ENCODE measurements at regions of chr6 and their contacts with region 1.

Region 1: DNA sequence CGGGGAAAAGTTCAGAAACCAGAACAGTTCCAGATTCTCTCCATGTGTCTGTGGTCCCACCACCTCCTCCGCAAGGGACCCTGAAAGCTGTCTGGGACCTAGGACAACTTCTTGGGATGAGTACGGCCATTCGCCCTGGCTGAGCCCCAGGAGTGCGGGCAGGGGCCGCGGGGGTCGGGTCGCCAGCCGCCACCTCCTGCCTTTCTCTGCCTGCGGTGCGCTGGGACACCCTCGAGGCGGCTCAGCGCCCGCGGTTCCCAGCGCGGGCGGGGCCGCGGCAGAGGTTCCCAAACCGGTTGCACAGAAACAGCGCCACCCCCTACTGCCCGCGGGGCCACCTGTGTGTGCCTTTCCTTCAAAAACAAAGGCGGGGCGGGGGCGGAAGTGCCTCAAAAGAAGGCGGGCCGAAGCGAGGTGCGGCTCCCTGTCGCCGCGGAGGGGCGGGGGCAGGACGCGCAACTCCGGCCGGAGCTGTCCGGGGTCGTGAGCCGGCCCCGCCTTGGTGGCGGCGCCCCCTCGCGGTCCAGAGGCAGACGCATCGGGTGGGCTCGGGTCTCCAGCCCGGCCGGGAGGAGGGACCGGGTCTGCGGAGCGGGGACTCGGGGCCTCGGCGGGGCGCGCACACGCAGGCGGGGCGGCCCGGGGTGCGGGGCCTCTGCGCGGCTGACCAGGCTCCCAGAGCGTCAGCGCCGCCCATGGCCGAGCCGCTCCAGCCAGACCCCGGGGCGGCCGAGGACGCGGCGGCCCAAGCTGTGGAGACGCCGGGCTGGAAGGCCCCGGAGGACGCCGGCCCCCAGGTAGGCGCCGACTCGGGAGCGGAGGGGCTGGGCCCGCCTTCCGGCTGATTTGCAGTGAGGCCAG is at the start of gene HEBP2:
- DNase-seq: peak; percentile 93
- ATAC-seq: peak; percentile 86
- H3K4me3 ChIP-seq: peak within 1 kb of the TSS; percentile 83 to 95 (median 93)
- H3K4me3 Mint-ChIP-seq: peak within 1 kb of the TSS; percentile 89
- H3K27ac ChIP-seq: peak within 1 kb of the TSS; percentile 55 to 93
- H3K27ac Mint-ChIP-seq: peak within 1 kb of the TSS; percentile 94
- H3K4me1 ChIP-seq: peaks cover 8 to 16% of the 10 kb centered on the region in 2 donors
- H3K4me1 Mint-ChIP-seq: peaks cover 23% of the 10 kb centered on the region
- H3K27me3 ChIP-seq: no peaks in the 10 kb centered on the region
- H3K27me3 Mint-ChIP-seq: no peaks in the 10 kb centered on the region
- CTCF ChIP-seq: peak; percentile 52
- total RNA-seq, gene HEBP2: 35.1 and 40.7 TPM in 2 replicates

Region 2: DNA sequence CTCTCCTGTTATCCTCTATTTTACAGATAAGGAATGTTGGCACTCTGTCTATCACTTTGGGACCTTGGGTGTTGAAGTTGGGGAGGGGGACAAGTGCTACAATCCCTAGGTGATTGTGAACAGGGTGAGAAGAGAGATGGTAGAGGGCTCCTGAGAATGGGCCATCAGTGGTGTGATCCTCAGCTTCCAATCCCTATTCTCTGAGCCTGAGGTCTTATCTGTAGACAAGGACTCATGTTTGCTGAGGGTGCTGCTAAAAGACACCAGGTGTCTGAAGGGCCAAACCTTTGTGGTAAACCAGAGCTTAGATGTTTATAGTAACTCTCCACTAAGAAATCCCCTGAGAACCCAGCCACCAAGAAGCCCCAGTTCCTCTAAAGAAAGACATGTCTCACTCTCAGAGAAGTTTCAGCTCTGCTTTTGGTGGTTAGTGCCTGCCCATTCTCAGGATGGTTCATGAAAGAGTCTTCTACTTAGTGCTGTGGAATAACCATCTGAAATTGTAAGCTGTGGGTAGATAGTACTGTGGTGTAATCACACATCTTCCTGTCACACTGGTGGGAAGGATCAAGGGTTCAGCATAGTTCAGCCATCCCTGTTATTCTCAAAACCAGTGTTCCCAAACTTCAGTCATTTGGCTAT is 1301.1 kb before region 1 on chr6:
- CTCF ChIA-PET with region 1: no interaction called
- POLR2A ChIA-PET with region 1: no interaction called
- intact Hi-C with region 1: loop called (anchors 10 kb)
- DNase-seq: peak; percentile 92
- ATAC-seq: peak; percentile 81
- H3K4me3 ChIP-seq: peak overlapping the region in 4 of 5 experiments; percentile 8 to 49 (median 16)
- H3K4me3 Mint-ChIP-seq: peak overlapping the region; percentile 86
- H3K27ac ChIP-seq: peak overlapping the region; percentile 97
- H3K27ac Mint-ChIP-seq: peak overlapping the region; percentile 99
- H3K4me1 ChIP-seq: peaks cover 89 to 91% of the 10 kb centered on the region in 2 donors
- H3K4me1 Mint-ChIP-seq: peaks cover 87% of the 10 kb centered on the region
- H3K27me3 ChIP-seq: no peaks in the 10 kb centered on the region
- H3K27me3 Mint-ChIP-seq: no peaks in the 10 kb centered on the region
- CTCF ChIP-seq: no peak

Region 3: DNA sequence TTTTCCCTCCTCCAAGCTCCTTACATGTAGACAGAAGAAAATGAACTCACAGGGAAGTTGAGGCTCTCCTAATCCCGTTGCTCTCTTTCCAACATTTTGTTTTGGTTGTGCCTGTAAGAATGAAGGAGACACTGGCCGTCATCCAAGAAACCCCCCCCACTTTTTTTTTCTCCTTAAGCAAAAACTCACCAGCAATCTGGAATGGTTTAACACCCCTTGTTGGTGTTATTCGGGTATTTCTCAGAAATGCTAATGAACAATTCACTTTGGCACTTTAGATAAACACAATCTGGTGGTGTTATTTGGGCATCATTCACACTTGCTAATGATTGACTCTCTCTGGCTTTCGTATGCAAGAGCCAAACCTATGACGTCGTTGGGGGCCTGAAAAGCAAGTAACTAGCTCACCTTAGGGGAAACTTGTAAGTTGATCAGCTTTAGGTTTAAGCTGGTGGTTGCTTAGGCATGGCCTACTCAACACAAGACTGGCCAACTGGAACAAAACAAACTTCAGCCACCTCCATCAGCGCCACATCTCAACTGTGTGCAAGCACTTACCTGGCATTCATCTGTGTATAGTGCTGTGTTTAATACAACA is 885.5 kb before region 1 on chr6:
- CTCF ChIA-PET with region 1: no interaction called
- POLR2A ChIA-PET with region 1: no interaction called
- intact Hi-C with region 1: no loop called
- DNase-seq: no peak
- ATAC-seq: no peak
- H3K4me3 ChIP-seq: no peak overlapping the region
- H3K4me3 Mint-ChIP-seq: no peak overlapping the region
- H3K27ac ChIP-seq: no peak overlapping the region
- H3K27ac Mint-ChIP-seq: no peak overlapping the region
- H3K4me1 ChIP-seq: peaks cover 0 to 5% of the 10 kb centered on the region in 2 donors
- H3K4me1 Mint-ChIP-seq: peaks cover 2% of the 10 kb centered on the region
- H3K27me3 ChIP-seq: peaks cover 0 to 60% (median 31%) of the 10 kb centered on the region in 4 experiments
- H3K27me3 Mint-ChIP-seq: peaks cover 75% of the 10 kb centered on the region
- CTCF ChIP-seq: no peak

Region 4: DNA sequence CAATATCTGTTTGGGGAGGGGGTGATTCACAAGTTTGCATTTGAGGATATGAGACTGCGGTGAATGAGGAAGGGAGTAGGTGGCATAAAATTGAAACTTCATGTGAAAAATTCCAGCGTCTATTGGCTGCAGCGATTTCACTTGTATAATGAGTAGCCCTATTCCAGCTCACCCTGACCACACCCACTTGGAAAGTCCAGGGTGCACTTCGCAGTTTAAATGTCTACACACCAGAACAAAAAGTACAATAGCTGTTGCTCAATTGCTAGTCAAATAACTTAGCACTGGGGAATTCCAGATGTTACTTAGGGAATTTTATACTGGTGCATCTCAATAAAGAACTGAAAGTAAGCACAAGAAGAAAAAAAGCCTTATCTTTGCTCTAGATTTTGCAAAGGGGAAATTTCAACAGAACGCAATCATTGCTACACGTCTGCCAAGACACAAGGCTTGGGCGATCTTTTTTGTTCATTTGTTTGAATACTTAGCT is 530.7 kb before region 1 on chr6:
- CTCF ChIA-PET with region 1: no interaction called
- POLR2A ChIA-PET with region 1: no interaction called
- intact Hi-C with region 1: loop called (anchors 5 kb)
- DNase-seq: peak; percentile 91
- ATAC-seq: peak; percentile 70
- H3K4me3 ChIP-seq: peak overlapping the region in 2 of 5 experiments; percentile 4 to 17
- H3K4me3 Mint-ChIP-seq: peak overlapping the region; percentile 94
- H3K27ac ChIP-seq: peak overlapping the region; percentile 51 to 96
- H3K27ac Mint-ChIP-seq: peak overlapping the region; percentile 80
- H3K4me1 ChIP-seq: peaks cover 58 to 64% of the 10 kb centered on the region in 2 donors
- H3K4me1 Mint-ChIP-seq: peaks cover 70% of the 10 kb centered on the region
- H3K27me3 ChIP-seq: no peaks in the 10 kb centered on the region
- H3K27me3 Mint-ChIP-seq: no peaks in the 10 kb centered on the region
- CTCF ChIP-seq: no peak

Region 5: DNA sequence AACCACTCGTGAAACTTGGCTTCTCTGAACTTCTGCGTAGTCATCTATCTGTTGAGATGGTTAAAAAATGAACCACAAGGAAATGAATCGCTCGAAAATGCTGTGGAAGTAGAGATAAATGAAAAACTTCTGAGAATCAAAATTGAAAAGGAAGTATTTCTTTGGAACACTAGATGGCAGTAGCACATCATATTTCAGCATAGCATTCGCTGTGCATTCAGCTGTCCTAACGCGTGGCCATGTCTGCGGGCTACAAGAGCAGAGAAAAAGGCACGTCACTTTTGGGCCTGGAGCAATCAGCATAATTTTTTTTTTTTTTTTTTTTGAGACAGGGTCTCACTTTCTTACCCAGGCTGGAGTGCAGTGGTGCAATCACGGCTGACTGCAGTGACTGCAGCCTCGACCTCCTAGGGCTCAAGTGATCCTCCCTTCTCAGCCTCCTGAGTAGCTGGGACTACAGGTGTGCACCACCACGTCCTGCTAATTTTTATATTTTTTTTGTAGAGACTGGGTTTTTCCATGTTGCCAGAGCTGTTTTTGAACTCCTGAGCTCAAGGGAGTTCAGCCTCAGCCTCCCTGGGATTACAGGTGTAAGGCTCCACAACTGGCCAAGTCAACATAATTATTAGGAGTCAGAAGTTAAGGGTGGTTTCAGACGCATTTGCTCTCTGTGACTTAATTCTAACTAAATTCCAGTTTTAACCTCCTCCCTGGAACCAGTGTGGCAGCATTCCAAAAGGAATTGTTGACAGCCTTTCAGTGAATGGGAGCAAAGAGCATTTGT is 288.0 kb before region 1 on chr6:
- CTCF ChIA-PET with region 1: interaction called, 39 read pairs
- POLR2A ChIA-PET with region 1: no interaction called
- intact Hi-C with region 1: loop called (anchors 1 kb)
- DNase-seq: peak; percentile 79
- ATAC-seq: peak; percentile 83
- H3K4me3 ChIP-seq: no peak overlapping the region
- H3K4me3 Mint-ChIP-seq: no peak overlapping the region
- H3K27ac ChIP-seq: no peak overlapping the region
- H3K27ac Mint-ChIP-seq: no peak overlapping the region
- H3K4me1 ChIP-seq: peaks cover 0 to 6% of the 10 kb centered on the region in 2 donors
- H3K4me1 Mint-ChIP-seq: peaks cover 2% of the 10 kb centered on the region
- H3K27me3 ChIP-seq: peaks cover 0 to 11% (median 0%) of the 10 kb centered on the region in 4 experiments
- H3K27me3 Mint-ChIP-seq: peaks cover 38% of the 10 kb centered on the region
- CTCF ChIP-seq: peak; percentile 90

Region 6: DNA sequence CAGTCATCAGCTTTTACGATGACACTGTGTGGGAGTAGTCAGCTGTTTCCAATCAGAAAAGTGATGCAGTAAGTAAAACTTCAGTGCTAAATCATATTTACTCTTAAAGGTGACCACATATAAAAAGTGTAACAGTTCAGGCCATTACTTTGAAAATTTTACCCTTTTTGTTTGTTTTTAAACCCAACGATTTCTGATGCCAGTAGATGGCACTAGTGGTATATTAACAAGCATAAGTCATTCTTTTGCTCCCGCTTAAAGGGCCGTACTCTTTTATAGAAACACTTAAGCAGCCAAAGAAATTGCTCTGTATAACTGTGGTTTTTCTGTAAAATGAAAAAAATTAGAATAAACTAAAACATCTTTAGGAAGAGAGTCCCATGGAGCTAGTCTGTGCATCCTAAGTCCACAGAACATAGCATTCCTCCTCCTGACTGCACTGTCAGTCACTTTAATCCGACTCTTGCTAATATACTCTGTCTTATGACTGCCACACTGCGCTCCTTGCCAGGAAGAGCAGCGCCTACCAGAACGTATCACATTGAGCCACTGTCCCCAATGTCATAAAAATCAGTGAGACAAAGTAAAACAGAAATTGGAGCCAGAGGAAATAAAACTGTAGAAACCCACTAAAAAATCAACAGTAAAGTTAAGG is 25.0 kb after region 1 on chr6:
- CTCF ChIA-PET with region 1: interaction called, 10 read pairs
- POLR2A ChIA-PET with region 1: no interaction called
- intact Hi-C with region 1: no loop called
- DNase-seq: peak; percentile 68
- ATAC-seq: peak; percentile 28
- H3K4me3 ChIP-seq: no peak overlapping the region
- H3K4me3 Mint-ChIP-seq: no peak overlapping the region
- H3K27ac ChIP-seq: no peak overlapping the region
- H3K27ac Mint-ChIP-seq: no peak overlapping the region
- H3K4me1 ChIP-seq: peaks cover 0 to 4% of the 10 kb centered on the region in 2 donors
- H3K4me1 Mint-ChIP-seq: peaks cover 6% of the 10 kb centered on the region
- H3K27me3 ChIP-seq: peaks cover 0 to 4% (median 0%) of the 10 kb centered on the region in 4 experiments
- H3K27me3 Mint-ChIP-seq: peaks cover 9% of the 10 kb centered on the region
- CTCF ChIP-seq: peak; percentile 90

Region 7: DNA sequence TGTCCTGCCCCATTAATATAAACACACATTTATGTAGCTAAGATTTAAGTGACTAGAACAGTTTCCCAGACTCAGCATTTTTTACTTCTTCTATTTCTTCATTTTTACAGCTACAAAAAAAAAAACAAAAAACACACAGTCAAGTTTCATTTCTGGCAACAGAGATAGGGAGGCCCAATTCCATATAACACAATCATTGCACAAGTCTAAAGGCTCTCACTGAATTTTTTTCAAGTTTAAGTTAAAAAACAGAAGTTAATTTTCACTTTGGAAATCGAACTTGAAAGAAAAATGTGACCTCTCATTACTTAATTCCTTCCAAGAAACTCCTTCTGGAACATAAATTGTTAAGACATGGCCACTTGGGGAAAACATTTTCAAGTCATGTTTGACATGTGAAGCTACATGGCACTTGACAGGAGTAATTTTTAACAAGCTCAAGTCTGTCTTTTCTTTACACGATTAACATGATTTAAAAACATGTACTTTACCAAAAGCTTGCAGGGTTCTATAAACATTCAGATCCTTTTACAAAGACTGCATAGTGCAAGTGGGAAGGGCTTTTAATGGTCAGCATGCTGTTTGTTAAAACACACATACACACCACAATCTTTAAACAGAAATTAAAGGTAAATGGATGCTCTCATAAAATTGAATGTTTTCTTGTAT is 269.4 kb after region 1 on chr6:
- CTCF ChIA-PET with region 1: no interaction called
- POLR2A ChIA-PET with region 1: no interaction called
- intact Hi-C with region 1: no loop called
- DNase-seq: no peak
- ATAC-seq: no peak
- H3K4me3 ChIP-seq: no peak overlapping the region
- H3K4me3 Mint-ChIP-seq: no peak overlapping the region
- H3K27ac ChIP-seq: no peak overlapping the region
- H3K27ac Mint-ChIP-seq: no peak overlapping the region
- H3K4me1 ChIP-seq: no peaks in the 10 kb centered on the region
- H3K4me1 Mint-ChIP-seq: no peaks in the 10 kb centered on the region
- H3K27me3 ChIP-seq: no peaks in the 10 kb centered on the region
- H3K27me3 Mint-ChIP-seq: peaks cover 11% of the 10 kb centered on the region
- CTCF ChIP-seq: no peak

Region 8: GRCh38 chr6:139028658-139029469 is 624.8 kb after region 1 on chr6 and contains the start of gene ABRACL:
- CTCF ChIA-PET with region 1: no interaction called
- POLR2A ChIA-PET with region 1: no interaction called
- intact Hi-C with region 1: loop called (anchors 10 kb)
- DNase-seq: peak; percentile 87
- ATAC-seq: peak; percentile 72
- H3K4me3 ChIP-seq: peak within 1 kb of the TSS; percentile 84 to 100 (median 89)
- H3K4me3 Mint-ChIP-seq: no peak within 1 kb of the TSS
- H3K27ac ChIP-seq: peak within 1 kb of the TSS; percentile 87 to 92
- H3K27ac Mint-ChIP-seq: peak within 1 kb of the TSS; percentile 94
- H3K4me1 ChIP-seq: peaks cover 27 to 28% of the 10 kb centered on the region in 2 donors
- H3K4me1 Mint-ChIP-seq: peaks cover 20% of the 10 kb centered on the region
- H3K27me3 ChIP-seq: no peaks in the 10 kb centered on the region
- H3K27me3 Mint-ChIP-seq: no peaks in the 10 kb centered on the region
- CTCF ChIP-seq: no peak
- total RNA-seq, gene ABRACL: 22.6 and 23.0 TPM in 2 replicates